Activated B cell treated with CpG ODN at 0.5 μM for 24 hours (primary cell): ENCODE measurements at regions of chr7 and their contacts with region 1.

Region 1: GRCh38 chr7:24572997-24573625 is at the start of gene PALS2:
- DNase-seq: peak; percentile 87
- ATAC-seq: peak; percentile 73
- H3K4me3 Mint-ChIP-seq: peak within 1 kb of the TSS; percentile 91
- H3K27ac Mint-ChIP-seq: peak within 1 kb of the TSS; percentile 89
- H3K4me1 Mint-ChIP-seq: peaks cover 40% of the 10 kb centered on the region
- H3K27me3 Mint-ChIP-seq: no peaks in the 10 kb centered on the region
- CTCF ChIP-seq: no peak
- total RNA-seq, gene PALS2: 29.8 and 34.8 TPM in 2 replicates

Region 2: GRCh38 chr7:23531794-23532489 is 1041.2 kb before region 1 on chr7 and contains the start of gene TRA2A:
- CTCF ChIA-PET with region 1: no interaction called
- POLR2A ChIA-PET with region 1: no interaction called
- intact Hi-C with region 1: loop called (anchors 10 kb)
- DNase-seq: peak; percentile 97
- ATAC-seq: peak; percentile 89
- H3K4me3 Mint-ChIP-seq: peak within 1 kb of the TSS; percentile 99
- H3K27ac Mint-ChIP-seq: peak within 1 kb of the TSS; percentile 100
- H3K4me1 Mint-ChIP-seq: peaks cover 49% of the 10 kb centered on the region
- H3K27me3 Mint-ChIP-seq: no peaks in the 10 kb centered on the region
- CTCF ChIP-seq: no peak
- total RNA-seq, gene TRA2A: 123 and 144 TPM in 2 replicates

Region 3: GRCh38 chr7:24290004-24290641 is 283.0 kb before region 1 on chr7:
- CTCF ChIA-PET with region 1: interaction called, 4 read pairs
- POLR2A ChIA-PET with region 1: no interaction called
- intact Hi-C with region 1: loop called (anchors 2 kb)
- DNase-seq: no peak
- ATAC-seq: peak; percentile 90
- H3K4me3 Mint-ChIP-seq: no peak overlapping the region
- H3K27ac Mint-ChIP-seq: no peak overlapping the region
- H3K4me1 Mint-ChIP-seq: peaks cover 13% of the 10 kb centered on the region
- H3K27me3 Mint-ChIP-seq: peaks cover 34% of the 10 kb centered on the region
- CTCF ChIP-seq: no peak

Region 4: GRCh38 chr7:24587848-24588247 is 14.7 kb after region 1 on chr7:
- CTCF ChIA-PET with region 1: interaction called, 9 read pairs
- POLR2A ChIA-PET with region 1: interaction called, 5 read pairs
- intact Hi-C with region 1: loop called (anchors 1 kb)
- DNase-seq: no peak
- ATAC-seq: peak; percentile 62
- H3K4me3 Mint-ChIP-seq: no peak overlapping the region
- H3K27ac Mint-ChIP-seq: no peak overlapping the region
- H3K4me1 Mint-ChIP-seq: peaks cover 14% of the 10 kb centered on the region
- H3K27me3 Mint-ChIP-seq: no peaks in the 10 kb centered on the region
- CTCF ChIP-seq: no peak

Region 5: DNA sequence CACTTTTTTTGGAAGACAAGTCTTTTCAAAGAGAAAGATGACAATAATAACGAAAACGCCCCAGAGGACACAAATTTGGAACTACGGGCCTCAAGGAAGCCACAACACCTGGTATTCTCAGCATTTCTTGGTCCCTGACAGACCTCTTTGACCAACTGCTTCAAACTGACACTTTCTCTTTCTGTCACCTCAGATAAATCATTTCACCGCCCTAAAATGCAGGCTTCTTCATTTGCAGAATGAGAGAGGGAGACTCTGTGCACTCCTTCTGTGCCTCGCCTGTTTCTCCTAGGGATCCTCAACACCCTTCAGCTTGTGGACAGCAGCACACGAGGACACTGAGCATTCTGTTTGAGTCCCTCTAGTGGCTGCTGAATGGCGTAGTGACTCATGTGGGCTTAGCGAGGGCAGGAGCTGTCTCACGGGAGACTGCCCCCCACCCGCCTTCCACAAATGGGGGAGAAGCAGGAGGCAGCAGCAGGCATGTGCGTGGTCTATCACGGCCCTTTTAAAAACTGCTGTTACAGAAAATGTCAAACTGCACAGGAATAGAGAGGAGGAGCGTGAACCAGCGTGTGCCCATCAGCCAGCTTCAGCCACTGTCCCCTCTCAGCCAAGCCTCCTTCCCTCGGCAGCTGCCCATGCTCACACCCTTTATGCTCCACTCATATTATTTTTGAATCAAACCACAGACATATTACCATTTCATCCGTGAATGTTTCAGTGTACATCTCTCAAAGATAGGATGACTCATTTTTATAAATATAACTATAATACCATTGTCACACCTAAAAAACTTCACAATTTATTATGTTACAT is 142.8 kb after region 1 on chr7:
- CTCF ChIA-PET with region 1: no interaction called
- POLR2A ChIA-PET with region 1: interaction called, 3 read pairs
- intact Hi-C with region 1: loop called (anchors 1 kb)
- DNase-seq: no peak
- ATAC-seq: no peak
- H3K4me3 Mint-ChIP-seq: peak overlapping the region; percentile 64
- H3K27ac Mint-ChIP-seq: peak overlapping the region; percentile 61
- H3K4me1 Mint-ChIP-seq: peaks cover 65% of the 10 kb centered on the region
- H3K27me3 Mint-ChIP-seq: no peaks in the 10 kb centered on the region
- CTCF ChIP-seq: no peak

Region 6: GRCh38 chr7:24979863-24980533 is 406.9 kb after region 1 on chr7 and contains the start of gene OSBPL3:
- CTCF ChIA-PET with region 1: no interaction called
- POLR2A ChIA-PET with region 1: no interaction called
- intact Hi-C with region 1: loop called (anchors 1 kb)
- DNase-seq: peak; percentile 92
- ATAC-seq: peak; percentile 90
- H3K4me3 Mint-ChIP-seq: peak within 1 kb of the TSS; percentile 98
- H3K27ac Mint-ChIP-seq: peak within 1 kb of the TSS; percentile 94
- H3K4me1 Mint-ChIP-seq: peaks cover 53% of the 10 kb centered on the region
- H3K27me3 Mint-ChIP-seq: no peaks in the 10 kb centered on the region
- CTCF ChIP-seq: no peak
- total RNA-seq, gene OSBPL3: 29.3 and 33.3 TPM in 2 replicates

Region 7: GRCh38 chr7:25125137-25125946 is 552.2 kb after region 1 on chr7 and contains the start of gene CYCS:
- CTCF ChIA-PET with region 1: no interaction called
- POLR2A ChIA-PET with region 1: interaction called, 5 read pairs
- intact Hi-C with region 1: loop called (anchors 2 kb)
- DNase-seq: peak; percentile 98
- ATAC-seq: peak; percentile 91
- H3K4me3 Mint-ChIP-seq: peak within 1 kb of the TSS; percentile 99
- H3K27ac Mint-ChIP-seq: peak within 1 kb of the TSS; percentile 99
- H3K4me1 Mint-ChIP-seq: peaks cover 31% of the 10 kb centered on the region
- H3K27me3 Mint-ChIP-seq: peaks cover 1% of the 10 kb centered on the region
- CTCF ChIP-seq: no peak
- total RNA-seq, gene CYCS: 73.0 and 85.0 TPM in 2 replicates